ENCODE measurements at regions of chr6 and their contacts with region 1.

Region 1: GRCh38 chr6:129102741-129103140 is 219.8 kb downstream of the LAMA2 start:
- DNase-seq: peak; percentile 18 to 67
- ATAC-seq: peak; percentile 74 to 92 (median 85)
- H3K4me3 ChIP-seq: no peak overlapping the region
- H3K27ac ChIP-seq: peak overlapping the region in 9 of 10 donors; percentile 26 to 77 (median 71)
- H3K4me1 ChIP-seq: peaks cover 3 to 79% (median 41%) of the 10 kb centered on the region in 9 donors
- H3K27me3 ChIP-seq: no peaks in the 10 kb centered on the region
- CTCF ChIP-seq: no peak

Region 2: DNA sequence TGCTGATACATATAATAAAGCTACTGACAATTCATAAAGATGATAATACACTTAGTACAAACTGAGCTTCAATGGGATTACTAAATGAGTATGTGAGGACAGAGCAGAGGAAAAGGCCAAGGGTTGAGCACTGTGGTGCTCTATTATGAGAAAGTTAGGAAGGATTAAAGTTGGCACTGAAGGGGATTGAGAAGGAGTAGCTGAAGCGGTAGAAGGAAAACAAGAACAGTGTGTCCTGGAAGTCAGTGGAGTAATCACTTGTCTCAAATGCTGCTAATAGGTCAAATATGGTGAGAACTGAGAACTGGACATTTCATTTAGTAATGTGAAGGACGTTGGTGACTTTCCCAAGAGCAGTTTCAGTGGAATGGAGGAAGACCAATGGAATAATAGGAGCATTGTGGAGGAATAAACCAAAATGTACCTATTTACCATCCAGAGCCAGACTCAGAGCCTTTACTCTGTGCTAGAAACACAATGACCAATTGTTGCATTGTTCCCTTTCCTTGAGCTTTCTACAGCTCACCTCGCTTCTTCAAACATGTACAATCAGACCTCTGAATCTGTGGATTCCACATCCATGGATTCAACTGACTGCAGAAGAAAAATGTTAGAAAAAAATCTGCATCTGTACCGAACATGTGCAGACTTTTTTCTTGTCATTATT is 36.1 kb after region 1 on chr6:
- intact Hi-C with region 1: loop called in 2 of 10 experiments (anchors 5 kb)
- DNase-seq: no peak
- ATAC-seq: peak in 4 of 8 donors; percentile 39 to 76 (median 62)
- H3K4me3 ChIP-seq: no peak overlapping the region
- H3K27ac ChIP-seq: peak overlapping the region; percentile 21 to 84 (median 61)
- H3K4me1 ChIP-seq: peaks cover 7 to 91% (median 58%) of the 10 kb centered on the region in 9 donors
- H3K27me3 ChIP-seq: no peaks in the 10 kb centered on the region
- CTCF ChIP-seq: no peak

Measured in heart right ventricle (tissue), 16 donors.